Heart left ventricle (tissue), 16 donors: ENCODE measurements at regions of chr14 and their contacts with region 1.

Region 1: GRCh38 chr14:32826404-32827082 is 112.1 kb upstream of the NPAS3 start:
- DNase-seq: peak in 3 of 5 donors; percentile 27 to 38 (median 30)
- ATAC-seq: peak; percentile 38 to 74 (median 65)
- H3K4me3 ChIP-seq: peak overlapping the region in 1 of 12 donors; percentile 13
- H3K27ac ChIP-seq: peak overlapping the region in 8 of 12 donors; percentile 13 to 65 (median 26)
- H3K4me1 ChIP-seq: peaks cover 0 to 58% (median 20%) of the 10 kb centered on the region in 12 donors
- H3K27me3 ChIP-seq: no peaks in the 10 kb centered on the region
- CTCF ChIP-seq: peak in 6 of 12 donors; percentile 12 to 43 (median 24)
- POLR2A ChIP-seq: no peak

Region 2: GRCh38 chr14:32552766-32553165 is 273.8 kb before region 1 on chr14:
- intact Hi-C with region 1: no loop called
- DNase-seq: no peak
- ATAC-seq: peak in 2 of 4 donors; percentile 27 to 41
- H3K4me3 ChIP-seq: no peak overlapping the region
- H3K27ac ChIP-seq: peak overlapping the region in 2 of 12 donors; percentile 4
- H3K4me1 ChIP-seq: peaks cover 0 to 34% (median 5%) of the 10 kb centered on the region in 12 donors
- H3K27me3 ChIP-seq: no peaks in the 10 kb centered on the region
- CTCF ChIP-seq: no peak
- POLR2A ChIP-seq: no peak

Region 3: DNA sequence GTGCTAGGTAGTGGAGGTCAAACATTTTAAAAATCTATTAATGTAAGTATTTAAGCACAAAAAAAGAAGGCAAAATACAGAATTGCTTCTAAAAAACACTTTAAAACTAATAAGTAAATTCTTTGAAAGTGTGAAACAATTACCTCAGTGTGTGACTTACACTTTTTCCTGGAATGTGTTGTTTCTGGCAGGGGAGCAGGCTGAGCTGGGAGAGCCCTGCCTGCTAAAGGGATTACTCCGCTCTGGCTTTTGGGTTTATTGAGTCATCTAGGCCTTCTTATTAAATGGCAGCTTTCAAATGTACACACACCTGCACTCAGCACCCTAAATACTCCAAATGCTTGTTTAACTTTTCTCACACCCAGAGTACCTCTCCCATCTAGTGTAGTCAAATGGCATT is 217.7 kb before region 1 on chr14:
- intact Hi-C with region 1: loop called in 1 of 10 experiments (anchors 10 kb)
- DNase-seq: no peak
- ATAC-seq: peak in 3 of 4 donors; percentile 20 to 41 (median 23)
- H3K4me3 ChIP-seq: no peak overlapping the region
- H3K27ac ChIP-seq: no peak overlapping the region
- H3K4me1 ChIP-seq: peaks cover 0 to 54% (median 19%) of the 10 kb centered on the region in 12 donors
- H3K27me3 ChIP-seq: no peaks in the 10 kb centered on the region
- CTCF ChIP-seq: no peak
- POLR2A ChIP-seq: no peak

Region 4: GRCh38 chr14:32702562-32702961 is 124.0 kb before region 1 on chr14:
- intact Hi-C with region 1: loop called in 1 of 10 experiments (anchors 10 kb)
- DNase-seq: peak; percentile 42 to 73 (median 50)
- ATAC-seq: peak; percentile 79 to 93 (median 90)
- H3K4me3 ChIP-seq: peak overlapping the region in 2 of 12 donors; percentile 10 to 27
- H3K27ac ChIP-seq: peak overlapping the region; percentile 30 to 95 (median 72)
- H3K4me1 ChIP-seq: peaks cover 0 to 35% (median 28%) of the 10 kb centered on the region in 12 donors
- H3K27me3 ChIP-seq: no peaks in the 10 kb centered on the region
- CTCF ChIP-seq: no peak
- POLR2A ChIP-seq: peak in 1 of 2 donors; percentile 26

Region 5: DNA sequence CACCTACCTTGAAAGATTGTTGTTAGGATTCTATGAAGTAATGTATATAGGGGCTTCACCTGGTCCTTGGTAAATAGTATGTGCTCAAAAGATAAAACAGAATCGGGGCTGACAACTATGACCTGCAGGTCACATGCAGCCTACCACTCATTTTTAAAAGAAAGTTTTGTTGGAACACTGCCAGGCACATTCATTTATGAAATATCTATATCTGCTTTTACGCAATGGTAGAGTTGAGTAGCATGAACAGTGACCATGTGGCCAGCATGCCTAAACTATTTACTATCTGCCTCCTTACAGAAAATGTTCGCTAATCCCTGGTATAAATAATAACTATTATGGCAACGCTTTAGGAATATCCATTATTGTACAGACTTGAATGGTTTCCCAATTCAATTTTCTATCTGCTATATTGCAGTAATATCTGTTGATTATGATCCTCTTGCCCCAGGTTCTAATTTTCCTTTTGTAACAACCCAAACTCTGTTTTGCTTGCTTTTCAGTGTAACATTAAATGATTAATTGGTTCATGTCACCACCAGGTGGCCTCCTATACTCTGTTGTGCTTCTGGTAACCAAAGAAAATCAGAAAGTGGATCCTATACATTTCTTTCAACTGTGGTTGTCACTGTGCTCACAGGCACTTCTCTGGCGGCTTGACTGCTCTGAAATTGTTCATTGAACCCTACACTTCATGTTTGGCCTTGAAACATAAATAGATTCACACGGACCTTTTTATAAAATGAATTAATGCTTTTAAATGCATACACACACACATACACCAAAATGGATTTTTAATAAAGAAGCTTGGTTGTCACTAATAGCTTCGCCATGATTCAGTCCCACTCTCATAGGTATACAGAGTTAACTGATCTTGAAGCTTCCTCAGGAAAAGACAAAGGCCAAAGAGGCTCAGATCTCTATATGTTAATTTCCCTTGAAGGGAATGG is 115.5 kb before region 1 on chr14:
- intact Hi-C with region 1: loop called in 6 of 10 experiments (anchors 5 to 10 kb)
- DNase-seq: peak in 1 of 5 donors; percentile 17
- ATAC-seq: peak in 1 of 4 donors; percentile 38
- H3K4me3 ChIP-seq: peak overlapping the region in 4 of 12 donors; percentile 7 to 24 (median 18)
- H3K27ac ChIP-seq: peak overlapping the region in 4 of 12 donors; percentile 12 to 79 (median 66)
- H3K4me1 ChIP-seq: peaks cover 5 to 45% (median 34%) of the 10 kb centered on the region in 12 donors
- H3K27me3 ChIP-seq: no peaks in the 10 kb centered on the region
- CTCF ChIP-seq: peak; percentile 31 to 70 (median 55)
- POLR2A ChIP-seq: no peak

Region 6: GRCh38 chr14:32939254-32940065 is 112.9 kb after region 1 on chr14:
- intact Hi-C with region 1: loop called in 1 of 10 experiments (anchors 10 kb)
- DNase-seq: peak; percentile 82 to 87 (median 84)
- ATAC-seq: peak; percentile 73 to 96 (median 92)
- H3K4me3 ChIP-seq: peak overlapping the region; percentile 25 to 69 (median 60)
- H3K27ac ChIP-seq: peak overlapping the region; percentile 55 to 88 (median 74)
- H3K4me1 ChIP-seq: peaks cover 0 to 23% (median 8%) of the 10 kb centered on the region in 12 donors
- H3K27me3 ChIP-seq: peaks cover 8 to 47% (median 30%) of the 10 kb centered on the region in 9 donors
- CTCF ChIP-seq: no peak
- POLR2A ChIP-seq: no peak